PC-3 (cell line): ENCODE measurements at regions of chr18 and their contacts with region 1.

Region 1: GRCh38 chr18:6521795-6522418 is 107.2 kb upstream of the L3MBTL4 start:
- DNase-seq: peak; percentile 85
- ATAC-seq: peak; percentile 84
- H3K4me3 ChIP-seq: no peak overlapping the region
- H3K27ac ChIP-seq: no peak overlapping the region
- H3K4me1 ChIP-seq: no peaks in the 10 kb centered on the region
- H3K27me3 ChIP-seq: no peaks in the 10 kb centered on the region
- CTCF ChIP-seq: peak; percentile 94

Region 2: DNA sequence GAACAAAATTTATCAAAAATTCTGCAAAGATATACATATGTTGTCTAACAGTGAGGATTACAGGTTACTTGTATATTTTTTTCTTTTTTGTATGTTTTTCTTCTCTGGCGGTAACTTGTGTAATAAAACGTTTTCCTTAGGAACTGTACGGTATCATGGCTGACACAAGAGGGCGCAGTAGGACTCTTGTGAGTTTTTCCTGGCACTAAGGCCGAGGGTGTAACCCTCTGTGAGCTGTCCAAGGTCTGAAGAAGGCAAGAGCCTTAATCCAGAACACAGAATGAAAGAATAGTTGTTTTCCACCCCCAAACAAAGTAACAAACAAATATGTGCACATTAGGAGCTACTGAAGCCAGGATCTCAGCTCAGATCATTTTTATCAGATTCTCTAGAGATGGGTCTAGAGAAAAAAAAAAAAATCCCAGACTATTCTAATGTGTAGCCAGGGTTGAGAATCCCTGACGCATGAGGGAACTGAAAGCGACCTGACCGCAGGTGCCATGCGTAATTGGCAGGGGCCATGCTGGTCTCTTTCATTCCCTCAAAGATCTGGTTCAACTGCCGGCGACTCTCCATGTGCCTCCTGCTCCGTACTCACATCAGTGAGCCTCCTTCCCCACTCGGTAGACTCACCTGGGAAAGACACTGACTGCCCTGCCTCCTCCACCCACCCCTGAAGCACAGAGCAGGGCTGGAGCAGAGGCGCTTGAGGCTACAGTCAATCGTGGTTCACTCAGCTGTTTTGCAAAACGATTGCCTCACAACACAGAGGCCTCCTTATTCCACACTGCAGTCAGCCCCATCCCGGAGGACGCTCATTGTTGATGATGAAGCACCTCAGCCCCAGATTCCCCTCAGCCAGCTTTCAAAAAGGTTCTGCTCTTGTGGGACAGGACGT is 653.4 kb before region 1 on chr18:
- CTCF ChIA-PET with region 1: interaction called, 13 read pairs
- POLR2A ChIA-PET with region 1: no interaction called
- intact Hi-C with region 1: loop called (anchors 1 kb)
- DNase-seq: peak; percentile 94
- ATAC-seq: peak; percentile 100
- H3K4me3 ChIP-seq: no peak overlapping the region
- H3K27ac ChIP-seq: no peak overlapping the region
- H3K4me1 ChIP-seq: no peaks in the 10 kb centered on the region
- H3K27me3 ChIP-seq: no peaks in the 10 kb centered on the region
- CTCF ChIP-seq: peak; percentile 94

Region 3: GRCh38 chr18:6414118-6414722 is 107.7 kb before region 1 on chr18:
- CTCF ChIA-PET with region 1: no interaction called
- POLR2A ChIA-PET with region 1: no interaction called
- intact Hi-C with region 1: loop called (anchors 5 kb)
- DNase-seq: peak; percentile 16
- ATAC-seq: peak; percentile 75
- H3K4me3 ChIP-seq: peak overlapping the region; percentile 64
- H3K27ac ChIP-seq: no peak overlapping the region
- H3K4me1 ChIP-seq: 0 out of 2 replicates have a peak, but pooled peaks cover 4% of the 10 kb centered on the region
- H3K27me3 ChIP-seq: peaks cover 9% of the 10 kb centered on the region; the same call in 1 of the 2 replicates
- CTCF ChIP-seq: no peak

Region 4: DNA sequence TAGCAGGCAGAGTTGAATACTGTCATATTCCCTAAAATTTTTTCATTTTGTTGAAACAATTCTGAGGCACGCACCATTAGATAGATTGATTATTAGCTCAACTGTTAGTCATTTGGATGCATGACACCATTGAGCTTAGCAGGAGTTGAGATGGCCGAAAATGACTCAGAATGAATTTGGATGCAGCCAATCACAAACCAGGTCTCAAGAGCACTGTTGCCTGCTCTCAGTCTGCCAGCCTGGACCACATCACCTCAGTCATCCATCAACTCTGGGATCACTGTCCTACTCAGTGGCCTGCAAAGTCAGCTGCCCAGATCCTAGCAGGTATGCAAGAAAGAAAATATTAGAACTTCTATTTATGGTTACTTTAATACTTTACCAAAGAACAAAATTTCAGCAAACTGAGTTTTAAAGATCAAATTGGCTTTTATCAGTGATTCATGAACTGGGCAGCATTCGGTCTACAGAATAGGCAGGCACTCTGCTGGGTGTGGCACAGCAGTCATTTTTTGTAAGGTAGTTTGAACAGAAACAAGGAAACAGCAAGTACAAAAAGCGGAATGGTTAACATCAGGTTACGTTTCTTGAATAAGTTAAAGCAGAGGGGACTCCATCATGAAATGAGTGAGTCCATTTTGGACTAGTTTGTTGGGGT is 54.9 kb after region 1 on chr18:
- CTCF ChIA-PET with region 1: no interaction called
- POLR2A ChIA-PET with region 1: no interaction called
- intact Hi-C with region 1: no loop called
- DNase-seq: no peak
- ATAC-seq: no peak
- H3K4me3 ChIP-seq: no peak overlapping the region
- H3K27ac ChIP-seq: no peak overlapping the region
- H3K4me1 ChIP-seq: no peaks in the 10 kb centered on the region
- H3K27me3 ChIP-seq: peaks cover 6% of the 10 kb centered on the region; the same call in 1 of the 2 replicates
- CTCF ChIP-seq: no peak

Region 5: GRCh38 chr18:6624271-6624660 is 102.4 kb after region 1 on chr18:
- CTCF ChIA-PET with region 1: no interaction called
- POLR2A ChIA-PET with region 1: no interaction called
- intact Hi-C with region 1: no loop called
- DNase-seq: peak; percentile 74
- ATAC-seq: peak; percentile 93
- H3K4me3 ChIP-seq: no peak overlapping the region
- H3K27ac ChIP-seq: no peak overlapping the region
- H3K4me1 ChIP-seq: peaks cover 12% of the 10 kb centered on the region
- H3K27me3 ChIP-seq: no peaks in the 10 kb centered on the region
- CTCF ChIP-seq: no peak

Region 6: DNA sequence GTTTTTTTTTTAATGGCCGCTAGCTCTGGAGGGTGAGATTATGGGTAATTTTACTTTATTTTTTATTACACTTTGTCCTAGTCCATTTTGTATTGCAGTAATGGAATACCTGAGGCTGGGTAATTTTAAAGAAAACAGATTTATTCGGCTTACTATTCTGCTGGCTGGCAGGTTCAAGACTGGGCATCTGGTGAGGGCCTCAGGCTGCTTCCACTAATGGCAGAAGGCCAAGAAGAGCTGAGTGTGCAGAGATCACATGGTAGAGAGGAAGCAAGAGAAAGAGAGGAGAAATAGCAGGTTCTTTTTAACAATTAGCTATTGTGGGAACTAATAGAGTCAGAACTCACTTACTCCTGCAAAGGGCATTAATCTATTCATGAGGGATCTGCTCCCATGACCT is 155.2 kb after region 1 on chr18:
- CTCF ChIA-PET with region 1: no interaction called
- POLR2A ChIA-PET with region 1: no interaction called
- intact Hi-C with region 1: no loop called
- DNase-seq: no peak
- ATAC-seq: no peak
- H3K4me3 ChIP-seq: no peak overlapping the region
- H3K27ac ChIP-seq: no peak overlapping the region
- H3K4me1 ChIP-seq: no peaks in the 10 kb centered on the region
- H3K27me3 ChIP-seq: no peaks in the 10 kb centered on the region
- CTCF ChIP-seq: no peak

Region 7: GRCh38 chr18:6885992-6886796 is 364.3 kb after region 1 on chr18:
- CTCF ChIA-PET with region 1: no interaction called
- POLR2A ChIA-PET with region 1: no interaction called
- intact Hi-C with region 1: loop called (anchors 5 kb)
- DNase-seq: peak; percentile 73
- ATAC-seq: peak; percentile 96
- H3K4me3 ChIP-seq: no peak overlapping the region
- H3K27ac ChIP-seq: no peak overlapping the region
- H3K4me1 ChIP-seq: no peaks in the 10 kb centered on the region
- H3K27me3 ChIP-seq: no peaks in the 10 kb centered on the region
- CTCF ChIP-seq: peak; percentile 90